ENCODE measurements at regions of chr3 and their contacts with region 1.

Region 1: GRCh38 chr3:142279965-142280590 is 54.7 kb upstream of the GK5 start:
- DNase-seq: no peak
- H3K4me3 ChIP-seq: no peak overlapping the region
- H3K27ac ChIP-seq: no peak overlapping the region
- H3K4me1 ChIP-seq: peaks cover 20% of the 10 kb centered on the region
- H3K27me3 ChIP-seq: no peaks in the 10 kb centered on the region
- CTCF ChIP-seq: peak; percentile 72

Region 2: DNA sequence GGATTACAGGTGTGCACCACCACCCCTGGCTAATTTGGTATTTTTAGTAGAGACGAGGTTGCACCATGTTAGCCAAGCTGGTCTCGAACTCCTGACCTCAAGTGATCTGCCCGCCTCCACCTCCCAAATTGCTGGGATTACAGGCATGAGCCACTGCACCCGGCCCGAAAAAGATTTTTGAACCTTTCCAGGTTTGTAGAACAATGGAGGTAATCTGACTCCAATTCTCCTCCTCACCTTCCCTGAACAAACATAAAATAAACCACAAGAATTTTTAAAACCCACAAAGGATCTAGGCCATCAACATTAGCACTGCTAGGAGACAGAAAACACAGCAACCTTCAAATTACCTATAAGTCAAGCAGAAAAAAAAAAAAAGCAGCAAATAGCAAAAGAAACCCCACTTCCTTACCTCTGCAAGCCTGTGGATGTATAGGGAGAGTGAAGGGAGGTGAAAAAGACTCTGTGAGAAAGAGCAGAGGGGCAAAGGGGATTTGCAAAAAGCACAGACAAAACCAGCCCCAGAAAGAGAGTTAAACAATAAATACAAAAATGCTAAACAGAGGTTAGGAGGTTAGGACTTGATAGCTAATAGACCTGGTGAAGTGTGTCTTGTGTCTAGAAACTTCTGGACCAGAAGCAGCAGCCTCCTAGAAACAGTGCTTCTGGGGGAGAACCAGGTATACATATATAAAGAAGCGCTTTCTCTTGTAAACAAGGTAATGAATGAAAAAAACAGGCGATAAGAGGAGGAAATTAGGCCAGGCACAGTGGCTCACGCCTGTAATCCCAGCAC is 162.8 kb before region 1 on chr3:
- intact Hi-C with region 1: loop called (anchors 5 kb)
- DNase-seq: no peak
- H3K4me3 ChIP-seq: no peak overlapping the region
- H3K27ac ChIP-seq: no peak overlapping the region
- H3K4me1 ChIP-seq: no peaks in the 10 kb centered on the region
- H3K27me3 ChIP-seq: no peaks in the 10 kb centered on the region
- CTCF ChIP-seq: no peak

Region 3: DNA sequence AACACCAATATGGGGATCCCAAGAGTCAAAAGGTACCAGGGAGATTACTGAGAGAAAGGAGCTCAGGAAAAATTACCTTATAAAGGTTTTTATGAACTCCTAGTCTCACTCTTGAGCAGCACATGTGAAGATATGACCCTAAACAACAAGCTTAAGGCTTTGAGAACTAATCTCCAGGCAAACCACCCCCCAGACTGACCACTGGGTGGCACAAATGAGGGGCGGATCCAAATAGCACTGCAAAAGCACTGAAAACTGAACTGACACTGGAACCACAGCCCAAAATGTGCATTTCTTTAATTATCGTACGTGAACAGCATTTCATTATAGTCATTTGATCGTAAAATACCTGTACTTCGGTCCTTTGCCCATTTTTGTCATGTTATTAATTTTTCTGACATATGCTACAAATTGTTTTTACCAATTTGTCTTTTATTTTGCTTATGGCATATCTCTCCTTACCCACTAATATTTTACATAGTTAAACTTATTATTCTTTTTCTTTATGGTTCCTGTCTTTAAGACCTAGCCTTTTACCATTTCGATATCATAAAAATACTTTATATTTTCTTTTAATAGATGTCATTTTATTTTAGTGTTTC is 99.2 kb before region 1 on chr3:
- intact Hi-C with region 1: loop called (anchors 5 kb)
- DNase-seq: peak; percentile 26
- H3K4me3 ChIP-seq: no peak overlapping the region
- H3K27ac ChIP-seq: no peak overlapping the region
- H3K4me1 ChIP-seq: no peaks in the 10 kb centered on the region
- H3K27me3 ChIP-seq: no peaks in the 10 kb centered on the region
- CTCF ChIP-seq: peak; percentile 64

Measured in left ventricle myocardium inferior (tissue), 1 donor.